ENCODE measurements at regions of chr9 and their contacts with region 1.

Region 1: GRCh38 chr9:5450359-5451091 is at the start of gene CD274:
- DNase-seq: peak; percentile 92
- ATAC-seq: peak; percentile 93
- H3K4me3 Mint-ChIP-seq: peak within 1 kb of the TSS; percentile 95
- H3K27ac Mint-ChIP-seq: peak within 1 kb of the TSS; percentile 97
- H3K4me1 Mint-ChIP-seq: peaks cover 71% of the 10 kb centered on the region
- H3K27me3 Mint-ChIP-seq: no peaks in the 10 kb centered on the region
- total RNA-seq, gene CD274: 8.3 to 10.4 TPM

Region 2: GRCh38 chr9:5292141-5292540 is 158.4 kb before region 1 on chr9:
- CTCF ChIA-PET with region 1: no interaction called
- DNase-seq: no peak
- ATAC-seq: no peak
- H3K4me3 Mint-ChIP-seq: no peak overlapping the region
- H3K27ac Mint-ChIP-seq: no peak overlapping the region
- H3K4me1 Mint-ChIP-seq: no peaks in the 10 kb centered on the region
- H3K27me3 Mint-ChIP-seq: peaks cover 2% of the 10 kb centered on the region

Region 3: DNA sequence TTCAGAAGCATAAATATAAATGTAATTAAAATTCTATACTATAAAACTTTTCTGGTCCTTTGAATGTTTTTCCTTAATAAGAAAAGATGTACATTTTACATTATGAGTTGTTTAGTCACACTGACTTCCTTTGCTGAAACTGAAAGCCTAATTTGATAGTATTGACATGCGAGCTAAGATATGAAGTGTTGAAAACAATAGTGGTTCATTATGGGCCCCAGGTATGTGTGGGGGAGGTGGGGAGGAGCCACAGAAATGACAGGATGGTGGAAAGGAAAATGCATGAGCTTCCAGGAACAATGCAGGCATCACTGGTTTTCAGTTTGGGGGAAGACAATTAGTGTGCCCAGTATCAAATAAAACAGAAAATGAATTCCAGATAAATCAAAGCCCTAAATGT is 75.4 kb before region 1 on chr9:
- CTCF ChIA-PET with region 1: no interaction called
- DNase-seq: no peak
- ATAC-seq: peak; percentile 60
- H3K4me3 Mint-ChIP-seq: no peak overlapping the region
- H3K27ac Mint-ChIP-seq: peak overlapping the region; percentile 16
- H3K4me1 Mint-ChIP-seq: peaks cover 25% of the 10 kb centered on the region
- H3K27me3 Mint-ChIP-seq: no peaks in the 10 kb centered on the region

Region 4: GRCh38 chr9:5510360-5510931 is 59.9 kb after region 1 on chr9 and contains the start of gene PDCD1LG2:
- CTCF ChIA-PET with region 1: interaction called, 24 read pairs
- DNase-seq: peak; percentile 75
- ATAC-seq: peak; percentile 87
- H3K4me3 Mint-ChIP-seq: peak within 1 kb of the TSS; percentile 79
- H3K27ac Mint-ChIP-seq: peak within 1 kb of the TSS; percentile 97
- H3K4me1 Mint-ChIP-seq: peaks cover 57% of the 10 kb centered on the region
- H3K27me3 Mint-ChIP-seq: no peaks in the 10 kb centered on the region
- total RNA-seq, gene PDCD1LG2: 1.5 to 3.2 TPM

Region 5: DNA sequence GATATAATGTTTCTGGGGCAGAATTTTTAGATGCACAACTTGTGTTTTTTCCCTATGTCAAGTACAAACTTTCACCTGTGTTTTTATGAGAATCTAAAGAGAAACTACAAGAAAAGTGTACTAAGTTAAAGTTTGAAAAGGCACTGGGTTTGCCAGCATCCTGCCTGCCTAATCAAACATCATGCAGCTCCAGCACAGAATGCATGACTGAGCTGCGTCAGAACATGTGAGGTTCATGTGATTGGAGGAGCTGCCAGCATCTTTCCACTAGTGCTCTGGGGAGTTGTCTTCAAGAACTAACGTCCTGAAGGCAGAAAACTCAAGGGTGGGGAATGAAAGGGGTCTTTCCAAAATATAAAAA is 132.3 kb after region 1 on chr9:
- CTCF ChIA-PET with region 1: interaction called, 88 read pairs
- DNase-seq: peak; percentile 57
- ATAC-seq: peak; percentile 40
- H3K4me3 Mint-ChIP-seq: no peak overlapping the region
- H3K27ac Mint-ChIP-seq: peak overlapping the region; percentile 56
- H3K4me1 Mint-ChIP-seq: peaks cover 55% of the 10 kb centered on the region
- H3K27me3 Mint-ChIP-seq: no peaks in the 10 kb centered on the region

Region 6: DNA sequence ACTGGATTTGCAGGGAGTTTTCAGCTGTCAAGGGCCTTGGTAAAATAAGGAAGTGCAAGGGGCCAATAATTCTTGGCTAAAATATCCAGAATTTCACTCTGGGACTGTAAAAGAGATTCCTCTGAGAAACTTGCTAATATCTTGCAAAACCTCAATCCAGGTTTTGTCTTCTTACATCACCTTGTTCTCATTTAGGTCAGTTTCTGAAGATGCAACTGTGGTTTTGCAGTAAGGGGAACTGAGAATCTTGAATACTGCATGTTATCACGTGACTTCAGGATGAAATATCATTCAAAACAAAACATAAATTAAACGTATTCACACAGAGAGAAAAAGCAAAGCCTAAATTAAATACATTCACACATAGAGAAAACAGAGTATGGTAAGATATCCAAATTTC is 143.4 kb after region 1 on chr9:
- CTCF ChIA-PET with region 1: interaction called, 88 read pairs
- DNase-seq: no peak
- ATAC-seq: no peak
- H3K4me3 Mint-ChIP-seq: no peak overlapping the region
- H3K27ac Mint-ChIP-seq: no peak overlapping the region
- H3K4me1 Mint-ChIP-seq: peaks cover 19% of the 10 kb centered on the region
- H3K27me3 Mint-ChIP-seq: peaks cover 2% of the 10 kb centered on the region

Measured in activated CD8-positive, alpha-beta memory T cell treated with anti-CD3 and anti-CD28 coated beads, Interleukin-2, amount 10 ng/mL, durations not matched to agents 7 days and 5 days (primary cell).